ENCODE measurements at regions of chr5 and their contacts with region 1.

Region 1: DNA sequence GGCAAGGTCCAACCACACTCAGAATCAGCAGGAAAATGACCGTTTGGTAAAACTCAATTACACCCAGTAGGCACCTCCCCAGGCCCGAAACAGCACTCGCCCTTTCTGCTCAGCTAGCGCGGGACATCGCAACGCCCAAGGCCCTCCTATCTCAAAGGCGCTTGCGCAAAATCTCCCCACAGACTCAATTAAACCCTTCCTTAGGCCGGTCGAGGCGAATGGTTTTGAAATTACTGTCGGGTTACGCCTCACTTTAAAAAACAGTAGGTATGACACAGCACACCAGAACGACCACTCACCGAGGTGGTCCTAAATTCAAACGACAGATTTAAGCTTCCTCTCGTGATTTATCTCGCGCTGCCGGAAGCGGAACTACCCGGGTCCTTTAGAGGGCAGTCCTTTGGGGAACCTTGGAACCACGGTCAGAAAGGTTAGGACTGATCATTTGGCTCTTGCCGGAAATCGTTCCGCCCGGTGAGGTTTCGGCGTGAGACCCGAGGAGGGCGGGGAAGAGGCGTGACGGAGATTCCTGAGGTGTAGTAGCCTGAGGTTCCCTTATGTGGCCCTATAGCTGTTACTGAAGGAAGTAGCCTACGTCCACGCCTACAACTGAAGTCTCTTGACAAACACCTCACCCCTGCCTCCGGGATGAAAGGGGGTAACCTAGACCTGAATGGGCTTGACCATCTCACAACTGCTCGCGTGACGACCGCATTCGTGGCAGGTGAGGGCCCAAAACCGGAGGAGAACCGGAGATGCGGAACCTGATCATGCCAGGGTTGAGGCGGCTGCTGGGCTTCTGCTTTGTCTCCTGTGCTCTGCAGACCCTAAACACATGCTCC is at the starts of genes GIN1 and PPIP5K2:
- DNase-seq: peak; percentile 97 to 98
- ATAC-seq: peak; percentile 99
- H3K4me3 ChIP-seq: peak within 1 kb of the TSS; percentile 90 to 99
- H3K27ac ChIP-seq: peak within 1 kb of the TSS; percentile 96 to 97
- H3K4me1 ChIP-seq: peaks cover 2 to 5% of the 10 kb centered on the region in 2 donors
- H3K27me3 ChIP-seq: no peaks in the 10 kb centered on the region
- total RNA-seq, gene GIN1: 7.0 to 9.2 TPM
- total RNA-seq, gene PPIP5K2: 75.1 to 79.4 TPM

Region 2: GRCh38 chr5:102754767-102755431 is 365.1 kb before region 1 on chr5 and contains the start of gene PAM:
- intact Hi-C with region 1: loop called in 1 of 2 experiments (anchors 5 kb)
- DNase-seq: peak; percentile 89 to 93
- ATAC-seq: peak; percentile 94
- H3K4me3 ChIP-seq: peak within 1 kb of the TSS; percentile 79 to 92
- H3K27ac ChIP-seq: peak within 1 kb of the TSS; percentile 81 to 93
- H3K4me1 ChIP-seq: peaks cover 0 to 3% of the 10 kb centered on the region in 2 donors
- H3K27me3 ChIP-seq: no peaks in the 10 kb centered on the region
- total RNA-seq, gene PAM: 711 to 787 TPM

Region 3: GRCh38 chr5:102991802-102992201 is 128.2 kb before region 1 on chr5:
- intact Hi-C with region 1: no loop called
- DNase-seq: no peak
- ATAC-seq: no peak
- H3K4me3 ChIP-seq: no peak overlapping the region
- H3K27ac ChIP-seq: no peak overlapping the region
- H3K4me1 ChIP-seq: peaks cover 0 to 2% of the 10 kb centered on the region in 2 donors
- H3K27me3 ChIP-seq: no peaks in the 10 kb centered on the region

Measured in aorta (tissue), 5 donors.